ENCODE measurements at regions of chr13 and their contacts with region 1.

Region 1: GRCh38 chr13:59318320-59318930 is 845.3 kb downstream of the DIAPH3 start:
- DNase-seq: peak; percentile 79
- ATAC-seq: no peak
- H3K4me3 Mint-ChIP-seq: no peak overlapping the region
- H3K27ac Mint-ChIP-seq: no peak overlapping the region
- H3K4me1 Mint-ChIP-seq: no peaks in the 10 kb centered on the region
- H3K27me3 Mint-ChIP-seq: peaks cover 2% of the 10 kb centered on the region

Region 2: GRCh38 chr13:57624565-57625435 is 1693.6 kb before region 1 on chr13:
- CTCF ChIA-PET with region 1: interaction called, 3 read pairs
- POLR2A ChIA-PET with region 1: no interaction called
- intact Hi-C with region 1: loop called (anchors 1 to 5 kb)
- DNase-seq: peak; percentile 32
- ATAC-seq: no peak
- H3K4me3 Mint-ChIP-seq: no peak overlapping the region
- H3K27ac Mint-ChIP-seq: no peak overlapping the region
- H3K4me1 Mint-ChIP-seq: peaks cover 13% of the 10 kb centered on the region
- H3K27me3 Mint-ChIP-seq: peaks cover 25% of the 10 kb centered on the region

Region 3: DNA sequence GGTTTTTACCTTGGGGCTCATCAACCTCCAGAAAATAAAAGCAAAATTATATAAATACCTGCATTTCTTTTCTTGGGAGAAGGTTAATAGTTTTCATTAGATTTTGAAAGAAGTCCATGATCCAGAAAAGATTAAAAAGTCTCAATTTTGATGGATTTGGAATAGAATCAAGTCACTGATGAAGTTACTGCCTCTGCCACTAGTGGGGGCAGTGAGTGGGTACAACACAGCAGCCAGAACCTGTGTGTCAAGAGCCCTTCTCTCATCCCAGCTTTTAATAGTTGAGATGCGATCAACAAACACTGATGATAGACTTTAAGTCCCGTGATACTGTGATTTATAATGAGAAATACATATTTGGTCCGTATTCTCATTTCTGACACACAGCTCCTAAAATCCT is 158.6 kb after region 1 on chr13:
- CTCF ChIA-PET with region 1: no interaction called
- POLR2A ChIA-PET with region 1: no interaction called
- intact Hi-C with region 1: no loop called
- DNase-seq: peak; percentile 11
- ATAC-seq: no peak
- H3K4me3 Mint-ChIP-seq: no peak overlapping the region
- H3K27ac Mint-ChIP-seq: no peak overlapping the region
- H3K4me1 Mint-ChIP-seq: no peaks in the 10 kb centered on the region
- H3K27me3 Mint-ChIP-seq: no peaks in the 10 kb centered on the region